ENCODE measurements at regions of chr13 and their contacts with region 1.

Region 1: GRCh38 chr13:24574847-24575246 is 62.3 kb upstream of the PARP4 start:
- DNase-seq: no peak
- H3K4me3 ChIP-seq: no peak overlapping the region
- H3K27ac ChIP-seq: no peak overlapping the region
- H3K4me1 ChIP-seq: no peaks in the 10 kb centered on the region
- H3K27me3 ChIP-seq: peaks cover 1% of the 10 kb centered on the region
- CTCF ChIP-seq: no peak
- EP300 ChIP-seq: no peak
- POLR2A ChIP-seq: no peak

Region 2: GRCh38 chr13:24678151-24678550 is 103.3 kb after region 1 on chr13:
- in situ Hi-C with region 1: loop called in 1 of 4 experiments (anchors 5 kb)
- intact Hi-C with region 1: no loop called
- DNase-seq: no peak
- H3K4me3 ChIP-seq: no peak overlapping the region
- H3K27ac ChIP-seq: no peak overlapping the region
- H3K4me1 ChIP-seq: peaks cover 0 to 12% (median 11%) of the 10 kb centered on the region in 4 donors
- H3K27me3 ChIP-seq: peaks cover 48% of the 10 kb centered on the region
- CTCF ChIP-seq: no peak
- EP300 ChIP-seq: no peak
- POLR2A ChIP-seq: no peak